Naive thymus-derived CD4-positive, alpha-beta T cell (primary cell): ENCODE measurements at regions of chr3 and their contacts with region 1.

Region 1: GRCh38 chr3:37967260-37967881 is 23.2 kb upstream of the VILL start:
- DNase-seq: peak; percentile 34 to 65 (median 57)
- ATAC-seq: peak; percentile 87
- H3K4me3 ChIP-seq: no peak overlapping the region
- H3K4me3 Mint-ChIP-seq: no peak overlapping the region
- H3K27ac ChIP-seq: no peak overlapping the region
- H3K27ac Mint-ChIP-seq: no peak overlapping the region
- H3K4me1 ChIP-seq: peaks cover 0 to 4% of the 10 kb centered on the region in 2 donors
- H3K4me1 Mint-ChIP-seq: peaks cover 0 to 9% (median 7%) of the 10 kb centered on the region in 7 donors
- H3K27me3 ChIP-seq: no peaks in the 10 kb centered on the region
- H3K27me3 Mint-ChIP-seq: no peaks in the 10 kb centered on the region

Region 2: GRCh38 chr3:37400945-37401344 is 566.4 kb before region 1 on chr3:
- CTCF ChIA-PET with region 1: no interaction called
- POLR2A ChIA-PET with region 1: no interaction called
- intact Hi-C with region 1: no loop called
- DNase-seq: no peak
- ATAC-seq: no peak
- H3K4me3 ChIP-seq: no peak overlapping the region
- H3K4me3 Mint-ChIP-seq: no peak overlapping the region
- H3K27ac ChIP-seq: no peak overlapping the region
- H3K27ac Mint-ChIP-seq: no peak overlapping the region
- H3K4me1 ChIP-seq: no peaks in the 10 kb centered on the region
- H3K4me1 Mint-ChIP-seq: peaks cover 0 to 5% (median 0%) of the 10 kb centered on the region in 7 donors
- H3K27me3 ChIP-seq: no peaks in the 10 kb centered on the region
- H3K27me3 Mint-ChIP-seq: no peaks in the 10 kb centered on the region

Region 3: DNA sequence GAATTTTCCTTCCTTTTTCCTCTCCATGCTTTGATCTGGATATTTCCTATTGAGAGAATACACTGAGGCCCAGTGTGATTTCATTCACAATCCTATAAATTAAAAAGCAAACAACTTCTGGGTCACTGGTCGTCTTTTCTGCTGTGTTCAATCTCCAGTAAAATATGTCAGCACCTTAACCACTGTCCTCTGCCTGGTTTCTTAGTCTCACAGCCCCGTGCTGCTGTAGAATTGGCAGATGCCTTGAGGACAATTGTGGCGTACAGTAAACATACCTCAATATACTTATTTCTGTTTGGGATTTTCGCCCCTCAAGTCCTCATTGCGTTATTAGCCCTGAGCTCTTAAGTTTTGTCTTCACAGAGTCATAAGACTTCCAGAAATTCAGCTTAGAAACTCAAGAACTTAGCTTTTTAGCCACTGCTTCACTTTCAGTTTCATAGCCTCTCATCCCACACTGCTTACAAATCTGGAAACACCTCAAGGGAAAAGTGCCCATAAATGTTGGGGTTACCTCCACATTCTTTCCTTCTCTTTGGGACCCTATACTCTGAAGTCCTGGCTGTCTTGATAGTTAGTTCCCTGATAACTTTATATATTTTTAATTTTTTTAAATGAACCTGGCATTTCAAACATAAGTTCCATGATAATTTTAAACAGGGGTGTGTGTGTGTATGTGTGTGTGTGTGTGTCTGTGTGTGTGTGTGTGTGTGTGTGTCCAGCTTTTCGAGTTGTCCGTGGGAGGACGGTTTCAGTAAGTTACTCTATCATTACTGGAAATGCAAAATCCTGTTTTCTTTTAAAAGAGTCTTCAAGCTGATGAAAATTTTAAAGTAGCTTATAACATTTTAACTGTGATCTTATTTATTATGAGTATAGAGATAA is 344.1 kb before region 1 on chr3:
- CTCF ChIA-PET with region 1: no interaction called
- POLR2A ChIA-PET with region 1: no interaction called
- intact Hi-C with region 1: no loop called
- DNase-seq: no peak
- ATAC-seq: no peak
- H3K4me3 ChIP-seq: no peak overlapping the region
- H3K4me3 Mint-ChIP-seq: no peak overlapping the region
- H3K27ac ChIP-seq: no peak overlapping the region
- H3K27ac Mint-ChIP-seq: no peak overlapping the region
- H3K4me1 ChIP-seq: no peaks in the 10 kb centered on the region
- H3K4me1 Mint-ChIP-seq: peaks cover 0 to 6% (median 0%) of the 10 kb centered on the region in 7 donors
- H3K27me3 ChIP-seq: no peaks in the 10 kb centered on the region
- H3K27me3 Mint-ChIP-seq: peaks cover 0 to 34% (median 18%) of the 10 kb centered on the region in 5 donors

Region 4: DNA sequence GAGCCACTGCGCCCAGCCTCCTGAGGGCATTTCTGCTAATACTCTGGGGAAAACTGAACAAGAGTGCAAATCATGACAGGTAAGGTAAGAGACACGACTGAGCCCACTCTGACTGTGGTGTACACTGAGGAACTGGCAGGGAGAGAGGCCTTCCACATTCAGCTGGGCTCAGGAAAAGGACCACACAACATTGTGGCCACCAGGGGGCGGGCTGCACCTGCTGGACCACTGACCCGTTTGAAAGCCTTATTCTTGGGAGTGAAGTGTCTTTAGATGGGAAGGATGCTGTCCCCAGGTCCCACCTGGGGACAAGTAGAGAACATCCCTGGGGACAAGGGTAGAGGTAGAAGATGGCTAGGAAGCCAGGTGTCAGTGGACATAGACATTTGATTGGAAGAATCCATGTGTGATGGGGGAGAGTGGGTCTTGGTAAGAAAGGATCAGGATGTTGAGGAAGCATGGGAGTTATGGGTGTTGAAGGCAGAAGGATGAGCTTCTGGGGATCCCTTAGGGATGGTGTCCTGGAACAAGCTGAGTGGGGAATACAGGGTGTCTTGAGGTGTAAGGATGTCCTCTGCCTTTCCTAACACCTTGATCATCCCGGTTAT is 111.9 kb before region 1 on chr3:
- CTCF ChIA-PET with region 1: interaction called, 3 read pairs
- POLR2A ChIA-PET with region 1: interaction called, 7 read pairs
- intact Hi-C with region 1: loop called (anchors 1 kb)
- DNase-seq: peak; percentile 53 to 82 (median 67)
- ATAC-seq: peak; percentile 59
- H3K4me3 ChIP-seq: no peak overlapping the region
- H3K4me3 Mint-ChIP-seq: no peak overlapping the region
- H3K27ac ChIP-seq: no peak overlapping the region
- H3K27ac Mint-ChIP-seq: peak overlapping the region in 3 of 9 donors; percentile 16 to 83 (median 42)
- H3K4me1 ChIP-seq: peaks cover 0 to 7% of the 10 kb centered on the region in 2 donors
- H3K4me1 Mint-ChIP-seq: peaks cover 2 to 12% (median 6%) of the 10 kb centered on the region in 7 donors
- H3K27me3 ChIP-seq: no peaks in the 10 kb centered on the region
- H3K27me3 Mint-ChIP-seq: peaks cover 0 to 4% (median 0%) of the 10 kb centered on the region in 5 donors

Region 5: DNA sequence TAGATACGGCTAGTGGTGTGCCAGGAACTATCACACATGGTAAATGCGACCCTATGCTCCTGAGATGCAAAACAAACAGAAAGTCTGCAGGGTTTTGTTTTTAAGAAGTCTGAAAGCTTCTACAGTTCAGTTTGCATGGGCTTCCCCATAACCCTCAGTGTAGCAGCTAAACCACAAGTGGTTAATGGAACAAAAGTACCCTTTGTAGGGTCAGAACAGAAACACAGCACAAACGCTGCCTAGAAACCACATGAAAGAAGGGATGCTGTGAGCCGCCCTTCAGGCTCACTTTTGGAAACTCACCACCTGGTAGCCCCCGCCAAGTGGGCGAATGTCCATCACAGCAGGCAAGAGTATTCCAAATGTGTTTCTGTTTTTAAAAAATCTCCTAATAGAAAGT is 59.5 kb before region 1 on chr3:
- CTCF ChIA-PET with region 1: interaction called, 4 read pairs
- POLR2A ChIA-PET with region 1: no interaction called
- intact Hi-C with region 1: loop called in 1 of 2 experiments (anchors 10 kb)
- DNase-seq: peak in 1 of 9 donors; percentile 30
- ATAC-seq: no peak
- H3K4me3 ChIP-seq: no peak overlapping the region
- H3K4me3 Mint-ChIP-seq: peak overlapping the region in 5 of 10 donors; percentile 7 to 69 (median 32)
- H3K27ac ChIP-seq: no peak overlapping the region
- H3K27ac Mint-ChIP-seq: peak overlapping the region in 1 of 9 donors; percentile 68
- H3K4me1 ChIP-seq: peaks cover 8 to 16% of the 10 kb centered on the region in 2 donors
- H3K4me1 Mint-ChIP-seq: peaks cover 18 to 56% (median 32%) of the 10 kb centered on the region in 7 donors
- H3K27me3 ChIP-seq: no peaks in the 10 kb centered on the region
- H3K27me3 Mint-ChIP-seq: no peaks in the 10 kb centered on the region

Region 6: GRCh38 chr3:37956723-37957528 is 10.4 kb before region 1 on chr3:
- CTCF ChIA-PET with region 1: interaction called, 28 read pairs
- POLR2A ChIA-PET with region 1: interaction called, 6 read pairs
- intact Hi-C with region 1: no loop called
- DNase-seq: peak in 6 of 9 donors; percentile 16 to 45 (median 31)
- ATAC-seq: peak; percentile 49
- H3K4me3 ChIP-seq: no peak overlapping the region
- H3K4me3 Mint-ChIP-seq: peak overlapping the region; percentile 64 to 85 (median 75)
- H3K27ac ChIP-seq: peak overlapping the region; percentile 63
- H3K27ac Mint-ChIP-seq: peak overlapping the region; percentile 89 to 99 (median 96)
- H3K4me1 ChIP-seq: peaks cover 0 to 20% of the 10 kb centered on the region in 2 donors
- H3K4me1 Mint-ChIP-seq: peaks cover 21 to 46% (median 35%) of the 10 kb centered on the region in 7 donors
- H3K27me3 ChIP-seq: no peaks in the 10 kb centered on the region
- H3K27me3 Mint-ChIP-seq: peaks cover 0 to 1% (median 0%) of the 10 kb centered on the region in 5 donors